ENCODE measurements at regions of chr11 and their contacts with region 1.

Region 1: GRCh38 chr11:1309498-1310317 is at the start of gene TOLLIP:
- DNase-seq: peak; percentile 97
- H3K4me3 Mint-ChIP-seq: peak within 1 kb of the TSS; percentile 76
- H3K27ac Mint-ChIP-seq: peak within 1 kb of the TSS; percentile 87
- H3K4me1 Mint-ChIP-seq: peaks cover 37% of the 10 kb centered on the region
- H3K27me3 Mint-ChIP-seq: no peaks in the 10 kb centered on the region
- total RNA-seq, gene TOLLIP: 30.0 to 32.1 TPM

Region 2: DNA sequence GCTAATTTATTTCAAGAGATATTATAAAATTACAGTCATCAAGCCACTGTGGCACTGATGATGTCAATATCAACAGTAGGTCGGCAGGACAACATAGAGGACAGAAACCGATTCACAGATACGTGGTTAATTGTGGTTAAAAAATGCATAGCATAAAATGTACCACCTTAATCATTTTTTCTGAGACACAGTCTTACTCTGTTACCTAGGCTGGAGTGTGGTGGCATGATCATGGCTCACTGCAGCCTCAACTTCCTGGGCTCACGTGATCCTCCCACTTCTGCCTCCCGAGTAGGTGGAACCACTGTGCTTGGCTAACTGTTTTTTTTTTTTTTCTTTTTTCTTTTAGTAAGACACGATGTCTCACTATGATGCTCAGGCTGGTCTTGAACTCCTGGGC is 20.8 kb after region 1 on chr11:
- CTCF ChIA-PET with region 1: interaction called, 4 read pairs
- POLR2A ChIA-PET with region 1: no interaction called
- intact Hi-C with region 1: loop called (anchors 2 kb)
- DNase-seq: peak; percentile 72
- H3K4me3 Mint-ChIP-seq: no peak overlapping the region
- H3K27ac Mint-ChIP-seq: peak overlapping the region; percentile 6
- H3K4me1 Mint-ChIP-seq: peaks cover 12% of the 10 kb centered on the region
- H3K27me3 Mint-ChIP-seq: peaks cover 6% of the 10 kb centered on the region

Region 3: DNA sequence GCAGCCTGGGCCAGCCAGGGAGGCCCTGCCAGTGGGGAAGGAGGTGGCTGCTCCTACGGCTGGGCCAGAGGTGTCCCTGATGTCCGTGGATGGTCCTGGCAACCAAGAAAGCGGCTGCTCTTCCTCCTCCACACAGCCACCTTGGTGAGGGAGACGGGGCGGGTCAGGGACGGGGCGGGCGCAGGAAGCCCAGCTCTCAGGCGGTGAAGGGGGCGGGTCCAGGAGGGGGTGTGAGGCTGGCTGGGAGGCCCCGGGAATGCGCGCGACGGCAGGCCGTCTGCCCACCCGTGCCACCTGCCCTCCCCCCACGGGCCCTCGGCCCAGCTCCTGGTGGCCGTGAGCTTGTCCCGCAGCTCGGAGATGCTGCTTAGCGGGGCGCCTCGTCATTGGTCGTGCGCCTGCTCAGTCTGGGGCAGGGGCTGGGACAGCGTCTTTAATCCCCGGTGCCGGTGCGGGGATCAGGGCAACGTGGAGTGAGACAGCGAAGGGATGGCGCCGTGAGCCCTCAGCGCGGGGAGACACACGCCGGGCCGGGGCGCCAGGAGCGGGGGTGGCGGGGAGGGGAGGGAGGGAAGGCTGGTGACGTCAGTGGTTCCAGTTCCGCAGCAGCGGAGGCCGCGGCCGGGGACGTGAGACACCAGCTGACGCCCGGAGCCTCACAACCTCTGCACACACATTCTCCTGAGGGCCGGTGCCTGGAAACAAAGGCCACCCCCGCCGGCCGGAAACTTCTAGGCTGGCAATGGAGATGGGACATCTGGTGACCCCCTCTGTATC is 73.3 kb after region 1 on chr11:
- CTCF ChIA-PET with region 1: interaction called, 5 read pairs
- POLR2A ChIA-PET with region 1: interaction called, 16 read pairs
- intact Hi-C with region 1: loop called (anchors 2 kb)
- DNase-seq: peak; percentile 89
- H3K4me3 Mint-ChIP-seq: peak overlapping the region; percentile 65
- H3K27ac Mint-ChIP-seq: peak overlapping the region; percentile 85
- H3K4me1 Mint-ChIP-seq: peaks cover 14% of the 10 kb centered on the region
- H3K27me3 Mint-ChIP-seq: no peaks in the 10 kb centered on the region

Measured in activated CD4-positive, alpha-beta memory T cell treated with anti-CD3 and anti-CD28 coated beads for 36 hours (primary cell).